Psoas muscle (tissue), 8 donors: ENCODE measurements at regions of chr4 and their contacts with region 1.

Region 1: DNA sequence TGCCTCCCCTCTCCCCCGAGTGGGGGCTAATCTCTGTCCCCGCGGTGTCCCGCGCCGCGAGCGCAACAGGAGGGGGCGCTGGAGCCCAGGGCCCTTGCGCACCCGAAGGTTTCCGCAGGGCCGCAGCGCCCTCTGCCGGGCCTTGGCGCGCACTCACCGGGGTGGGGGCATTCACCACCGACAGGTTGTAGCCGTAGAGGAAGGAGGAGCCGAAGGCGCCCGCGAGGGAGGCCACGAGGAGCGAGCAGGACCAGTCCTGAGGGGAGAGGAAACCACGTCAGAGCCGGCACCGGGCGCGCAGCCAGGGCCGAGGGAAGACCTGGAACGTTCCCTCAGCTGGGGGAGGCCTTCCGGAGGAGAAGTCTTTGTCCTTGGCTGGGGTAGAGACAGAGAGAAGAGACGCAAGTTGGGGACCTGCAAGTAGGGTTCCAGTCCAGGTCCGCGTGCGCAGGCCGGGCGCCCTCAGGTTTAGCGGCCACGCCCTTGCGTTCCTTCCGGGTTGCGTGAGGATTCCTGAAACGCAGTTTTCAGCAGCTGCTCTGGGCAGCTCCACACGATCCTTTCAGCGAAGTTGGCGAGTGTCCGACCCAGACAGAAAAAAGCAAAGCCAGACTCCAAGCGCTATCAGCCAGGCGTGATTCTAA is 2.4 kb downstream of the SLC2A9 start:
- DNase-seq: peak; percentile 98
- ATAC-seq: peak; percentile 96 to 97 (median 96)
- H3K4me3 ChIP-seq: peak overlapping the region; percentile 62
- H3K27ac ChIP-seq: peak overlapping the region; percentile 80
- H3K4me1 ChIP-seq: peaks cover 24% of the 10 kb centered on the region
- H3K27me3 ChIP-seq: no peaks in the 10 kb centered on the region
- CTCF ChIP-seq: peak; percentile 97

Region 2: GRCh38 chr4:9691238-9692065 is 327.5 kb before region 1 on chr4:
- intact Hi-C with region 1: loop called in 1 of 2 experiments (anchors 10 kb)
- DNase-seq: peak; percentile 94 to 97
- ATAC-seq: peak; percentile 100
- H3K4me3 ChIP-seq: peak overlapping the region; percentile 70
- H3K27ac ChIP-seq: peak overlapping the region; percentile 55
- H3K4me1 ChIP-seq: no peaks in the 10 kb centered on the region
- H3K27me3 ChIP-seq: no peaks in the 10 kb centered on the region
- CTCF ChIP-seq: no peak